ENCODE measurements at regions of chr9 and their contacts with region 1.

Region 1: GRCh38 chr9:4315582-4316215 is 15.8 kb upstream of the GLIS3 start:
- DNase-seq: peak; percentile 50
- H3K4me3 ChIP-seq: no peak overlapping the region
- H3K27ac ChIP-seq: no peak overlapping the region
- H3K4me1 ChIP-seq: no peaks in the 10 kb centered on the region
- H3K27me3 ChIP-seq: no peaks in the 10 kb centered on the region
- CTCF ChIP-seq: peak; percentile 86 to 92

Region 2: GRCh38 chr9:4339357-4339756 is 23.7 kb after region 1 on chr9:
- CTCF ChIA-PET with region 1: no interaction called
- dilution Hi-C with region 1: no loop called
- in situ Hi-C with region 1: no loop called
- intact Hi-C with region 1: loop called (anchors 1 kb)
- DNase-seq: peak; percentile 80
- H3K4me3 ChIP-seq: no peak overlapping the region
- H3K27ac ChIP-seq: no peak overlapping the region
- H3K4me1 ChIP-seq: peaks cover 7% of the 10 kb centered on the region
- H3K27me3 ChIP-seq: no peaks in the 10 kb centered on the region
- CTCF ChIP-seq: peak; percentile 96 to 99

Region 3: DNA sequence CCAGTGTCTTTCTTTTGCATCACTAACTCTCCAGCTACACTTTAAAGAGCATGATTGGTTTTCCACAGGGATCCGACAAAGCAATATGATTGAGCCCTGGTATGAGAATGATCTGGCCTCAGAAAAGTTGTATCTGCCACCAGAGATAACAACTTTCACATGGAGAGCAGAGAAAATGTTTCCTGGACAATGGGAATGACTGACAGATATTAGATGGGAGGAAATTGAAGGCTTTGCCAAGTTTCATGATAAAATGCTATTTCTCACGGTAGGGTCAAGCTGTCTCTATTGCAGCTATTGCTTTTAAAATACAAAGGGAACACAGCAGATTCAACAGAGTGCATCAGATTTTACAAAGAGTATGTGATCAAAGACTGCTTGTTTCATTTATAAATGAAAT is 40.6 kb after region 1 on chr9:
- CTCF ChIA-PET with region 1: interaction called, 3 read pairs
- dilution Hi-C with region 1: no loop called
- in situ Hi-C with region 1: loop called (anchors 5 to 10 kb)
- intact Hi-C with region 1: no loop called
- DNase-seq: no peak
- H3K4me3 ChIP-seq: no peak overlapping the region
- H3K27ac ChIP-seq: no peak overlapping the region
- H3K4me1 ChIP-seq: no peaks in the 10 kb centered on the region
- H3K27me3 ChIP-seq: no peaks in the 10 kb centered on the region
- CTCF ChIP-seq: no peak

Region 4: DNA sequence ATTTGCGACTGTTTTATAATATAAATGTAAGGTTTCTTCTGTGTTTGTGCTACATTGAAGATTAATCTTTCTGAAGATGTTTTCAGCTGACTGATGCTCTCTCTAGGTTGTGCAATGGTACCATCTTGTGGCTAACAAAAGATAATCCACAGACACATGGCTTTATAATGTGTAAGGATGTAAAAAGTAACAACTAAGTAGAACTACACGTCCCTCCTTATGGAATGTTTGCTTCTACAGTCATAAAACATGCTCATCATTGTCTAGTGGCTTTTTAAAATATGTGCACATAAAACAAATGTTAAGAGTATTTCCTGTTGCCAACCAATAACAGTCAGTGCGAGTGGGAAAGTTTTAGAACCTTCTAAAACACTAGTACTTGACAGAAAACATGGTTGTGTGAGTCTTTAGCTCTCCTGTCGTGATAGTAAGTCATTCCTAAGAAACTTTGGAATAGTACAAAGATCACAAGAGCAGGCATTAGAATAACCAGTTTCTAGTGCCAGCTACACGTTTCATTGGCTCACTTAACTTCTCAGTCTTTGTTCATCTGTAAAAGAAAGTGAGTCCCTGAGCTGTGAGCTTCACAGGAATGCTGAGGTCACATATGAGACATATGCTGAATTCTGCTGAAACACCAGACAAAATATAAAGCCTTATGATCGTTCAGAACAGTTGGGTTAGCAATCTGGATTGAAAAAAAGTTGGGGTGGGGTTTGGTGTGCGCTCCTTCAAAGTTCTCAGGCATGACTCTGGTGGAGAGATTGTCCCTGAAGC is 59.9 kb after region 1 on chr9:
- CTCF ChIA-PET with region 1: no interaction called
- dilution Hi-C with region 1: no loop called
- in situ Hi-C with region 1: no loop called
- intact Hi-C with region 1: loop called (anchors 2 kb)
- DNase-seq: peak; percentile 56
- H3K4me3 ChIP-seq: no peak overlapping the region
- H3K27ac ChIP-seq: no peak overlapping the region
- H3K4me1 ChIP-seq: peaks cover 6% of the 10 kb centered on the region
- H3K27me3 ChIP-seq: no peaks in the 10 kb centered on the region
- CTCF ChIP-seq: peak; percentile 60

Region 5: DNA sequence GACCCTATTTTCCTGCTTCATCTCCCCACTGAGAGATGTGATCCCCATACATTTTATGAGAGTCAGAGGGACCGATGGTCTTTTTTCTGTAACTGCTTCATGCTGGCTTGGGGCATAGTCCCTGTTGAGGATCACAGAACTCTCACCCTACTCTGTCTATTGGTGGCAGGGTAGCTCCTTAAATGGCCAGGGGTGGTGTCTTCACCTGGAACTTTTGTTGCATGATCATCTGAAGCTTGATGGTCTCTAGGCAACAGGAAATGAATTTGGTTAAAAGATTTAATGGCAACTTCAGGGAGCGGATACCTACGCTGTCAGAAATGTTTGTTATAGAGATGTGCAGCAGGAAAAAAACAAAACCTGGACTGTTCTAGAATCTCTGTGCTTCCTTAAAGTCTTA is 71.1 kb after region 1 on chr9:
- CTCF ChIA-PET with region 1: no interaction called
- dilution Hi-C with region 1: no loop called
- in situ Hi-C with region 1: no loop called
- intact Hi-C with region 1: no loop called
- DNase-seq: no peak
- H3K4me3 ChIP-seq: no peak overlapping the region
- H3K27ac ChIP-seq: no peak overlapping the region
- H3K4me1 ChIP-seq: no peaks in the 10 kb centered on the region
- H3K27me3 ChIP-seq: no peaks in the 10 kb centered on the region
- CTCF ChIP-seq: peak in 1 of 2 donors; percentile 20